Ascending aorta (tissue), 2 donors: ENCODE measurements at regions of chr3 and their contacts with region 1.

Region 1: GRCh38 chr3:71652781-71653413 is 69.4 kb upstream of the FOXP1 start:
- DNase-seq: peak in 1 of 2 donors; percentile 70
- H3K4me3 ChIP-seq: peak overlapping the region in 1 of 2 donors; percentile 42
- H3K27ac ChIP-seq: no peak overlapping the region
- H3K4me1 ChIP-seq: peaks cover 0 to 6% of the 10 kb centered on the region in 2 donors
- H3K27me3 ChIP-seq: no peaks in the 10 kb centered on the region
- CTCF ChIP-seq: peak; percentile 42 to 63 (median 48)

Region 2: DNA sequence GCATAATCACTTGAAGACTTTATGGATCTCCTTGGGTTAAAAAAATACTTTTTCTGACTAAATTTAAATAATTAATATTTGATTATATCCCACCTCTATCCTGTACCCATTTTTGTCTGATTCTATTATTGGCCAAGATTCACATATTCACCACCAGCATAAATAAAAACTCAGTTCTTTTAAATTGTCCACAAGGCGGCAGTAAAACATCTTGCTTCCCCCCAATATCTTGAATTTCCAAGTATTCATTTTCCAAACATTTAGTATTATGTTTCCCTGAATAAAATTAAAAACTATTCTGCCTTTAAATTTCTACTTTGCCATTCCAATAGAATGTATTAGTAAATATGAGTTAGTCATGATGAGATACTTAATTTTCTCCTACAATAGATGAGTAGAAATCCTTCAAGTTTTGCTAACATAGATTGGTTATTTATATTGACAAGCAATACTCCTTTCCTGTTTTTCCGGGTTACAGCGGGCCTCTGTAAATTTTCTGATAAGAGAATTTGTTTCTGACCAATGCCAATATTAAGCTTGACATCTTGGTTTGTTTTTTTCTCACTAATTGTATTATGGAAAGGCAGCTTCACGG is 1121.7 kb before region 1 on chr3:
- intact Hi-C with region 1: loop called (anchors 5 kb)
- DNase-seq: no peak
- H3K4me3 ChIP-seq: no peak overlapping the region
- H3K27ac ChIP-seq: no peak overlapping the region
- H3K4me1 ChIP-seq: no peaks in the 10 kb centered on the region
- H3K27me3 ChIP-seq: no peaks in the 10 kb centered on the region
- CTCF ChIP-seq: peak; percentile 46 to 57 (median 48)

Region 3: DNA sequence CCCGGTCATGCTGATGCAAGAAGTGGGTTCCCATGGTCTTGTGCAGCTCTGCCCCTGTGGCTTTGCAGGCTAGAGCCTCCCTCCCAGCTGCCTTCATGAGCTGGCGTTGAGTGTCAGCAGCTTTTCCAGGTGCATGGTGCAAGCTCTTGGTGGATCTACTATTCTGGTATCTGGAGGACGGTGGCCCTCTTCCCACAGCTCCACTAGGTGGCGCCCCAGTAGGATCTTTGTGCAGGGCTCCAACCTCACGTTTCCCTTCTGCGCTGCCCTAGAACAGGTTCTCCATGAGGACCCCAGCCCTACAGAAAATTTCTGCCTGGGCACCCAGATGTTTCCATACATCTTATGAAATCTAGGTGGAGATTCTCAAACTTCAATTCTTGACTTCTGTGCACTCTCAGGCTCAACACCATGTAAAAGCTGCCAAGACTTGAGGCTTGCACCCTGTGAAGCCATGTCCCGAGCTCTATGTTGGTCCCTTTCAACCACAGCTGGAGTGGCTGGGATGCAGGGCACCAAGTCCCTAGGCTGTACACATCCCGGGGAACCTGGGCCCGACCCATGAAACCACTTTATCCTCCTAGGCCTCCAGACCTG is 1102.1 kb before region 1 on chr3:
- intact Hi-C with region 1: loop called (anchors 5 kb)
- DNase-seq: peak in 1 of 2 donors; percentile 73
- H3K4me3 ChIP-seq: no peak overlapping the region
- H3K27ac ChIP-seq: no peak overlapping the region
- H3K4me1 ChIP-seq: no peaks in the 10 kb centered on the region
- H3K27me3 ChIP-seq: no peaks in the 10 kb centered on the region
- CTCF ChIP-seq: peak; percentile 59 to 77 (median 72)

Region 4: GRCh38 chr3:70716832-70717231 is 936.1 kb before region 1 on chr3:
- intact Hi-C with region 1: loop called (anchors 5 kb)
- DNase-seq: no peak
- H3K4me3 ChIP-seq: no peak overlapping the region
- H3K27ac ChIP-seq: no peak overlapping the region
- H3K4me1 ChIP-seq: peaks cover 3 to 7% of the 10 kb centered on the region in 2 donors
- H3K27me3 ChIP-seq: no peaks in the 10 kb centered on the region
- CTCF ChIP-seq: peak; percentile 30 to 65 (median 52)